Heart left ventricle (tissue), 16 donors: ENCODE measurements at regions of chr4 and their contacts with region 1.

Region 1: DNA sequence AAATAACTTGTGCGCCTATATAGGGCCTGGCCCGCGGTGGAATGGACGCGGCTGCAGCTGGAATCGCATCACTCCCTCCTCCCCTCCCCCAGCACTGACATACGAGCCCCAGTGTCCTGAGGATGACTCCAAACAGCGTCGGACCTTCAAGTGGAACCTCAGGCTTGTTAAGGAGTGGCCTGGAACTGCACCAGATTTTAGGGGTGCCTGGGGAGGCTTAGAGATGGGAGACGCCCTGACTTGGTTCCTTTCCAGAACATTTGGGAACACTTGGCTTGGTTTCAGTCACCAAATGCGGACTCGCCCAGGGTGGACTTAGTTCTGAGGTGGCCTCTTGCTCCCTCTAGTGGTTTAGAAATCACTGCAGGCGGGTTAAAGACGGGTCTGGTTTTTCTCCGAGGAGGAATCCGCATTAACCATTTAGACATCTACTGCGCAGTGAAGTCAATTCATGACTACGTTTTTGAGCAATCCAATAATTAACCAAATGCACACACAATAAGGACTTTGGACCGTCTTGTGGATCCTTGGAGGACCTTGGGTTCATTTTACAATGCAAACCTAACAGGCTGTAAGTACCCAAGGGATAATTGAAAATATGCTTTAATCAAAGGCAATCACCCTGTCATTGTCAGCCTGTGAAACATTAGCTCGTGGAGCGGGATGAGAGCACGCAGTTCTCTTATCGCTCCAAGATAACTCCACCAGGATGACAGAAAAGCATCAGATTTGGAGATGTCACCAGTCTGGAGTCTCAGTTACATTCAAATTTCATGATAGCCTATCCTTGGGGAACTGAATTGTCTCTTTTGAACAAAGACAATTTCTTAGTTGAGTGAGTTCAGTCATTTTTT is 11.2 kb upstream of the PDGFRA start:
- DNase-seq: peak; percentile 77 to 83 (median 80)
- ATAC-seq: peak; percentile 77 to 92 (median 92)
- H3K4me3 ChIP-seq: peak overlapping the region in 10 of 12 donors; percentile 28 to 58 (median 48)
- H3K27ac ChIP-seq: peak overlapping the region in 4 of 12 donors; percentile 39 to 41 (median 40)
- H3K4me1 ChIP-seq: peaks cover 0 to 18% (median 5%) of the 10 kb centered on the region in 12 donors
- H3K27me3 ChIP-seq: peaks cover 0 to 41% (median 0%) of the 10 kb centered on the region in 9 donors
- CTCF ChIP-seq: peak; percentile 80 to 97 (median 94)
- POLR2A ChIP-seq: no peak

Region 2: DNA sequence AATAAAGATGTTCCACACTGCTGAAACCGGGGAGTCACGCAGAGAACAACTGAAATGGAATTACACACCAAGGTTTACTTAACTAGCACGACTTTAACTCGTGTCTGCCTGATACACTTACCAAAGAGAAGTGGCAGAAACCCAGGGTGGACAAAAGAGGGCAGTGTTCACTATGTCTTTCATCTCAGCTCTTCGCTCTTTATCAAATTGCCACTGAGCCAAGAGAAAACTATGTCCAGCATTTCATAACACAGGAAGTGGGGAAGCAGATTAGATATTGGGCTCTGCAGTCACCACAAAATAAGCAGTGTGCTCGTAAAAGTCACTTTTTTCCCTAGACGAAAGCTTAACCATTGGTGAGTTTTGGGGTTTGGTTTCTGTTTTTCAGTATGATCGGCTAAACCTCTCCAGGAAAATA is 309.2 kb before region 1 on chr4:
- intact Hi-C with region 1: loop called in 9 of 10 experiments (anchors 1 to 10 kb)
- DNase-seq: peak in 3 of 5 donors; percentile 37 to 50 (median 44)
- ATAC-seq: peak; percentile 84 to 94 (median 93)
- H3K4me3 ChIP-seq: peak overlapping the region in 8 of 12 donors; percentile 12 to 42 (median 27)
- H3K27ac ChIP-seq: peak overlapping the region in 8 of 12 donors; percentile 27 to 63 (median 40)
- H3K4me1 ChIP-seq: peaks cover 0 to 37% (median 14%) of the 10 kb centered on the region in 12 donors
- H3K27me3 ChIP-seq: peaks cover 0 to 32% (median 11%) of the 10 kb centered on the region in 9 donors
- CTCF ChIP-seq: peak; percentile 40 to 83 (median 67)
- POLR2A ChIP-seq: no peak

Region 3: DNA sequence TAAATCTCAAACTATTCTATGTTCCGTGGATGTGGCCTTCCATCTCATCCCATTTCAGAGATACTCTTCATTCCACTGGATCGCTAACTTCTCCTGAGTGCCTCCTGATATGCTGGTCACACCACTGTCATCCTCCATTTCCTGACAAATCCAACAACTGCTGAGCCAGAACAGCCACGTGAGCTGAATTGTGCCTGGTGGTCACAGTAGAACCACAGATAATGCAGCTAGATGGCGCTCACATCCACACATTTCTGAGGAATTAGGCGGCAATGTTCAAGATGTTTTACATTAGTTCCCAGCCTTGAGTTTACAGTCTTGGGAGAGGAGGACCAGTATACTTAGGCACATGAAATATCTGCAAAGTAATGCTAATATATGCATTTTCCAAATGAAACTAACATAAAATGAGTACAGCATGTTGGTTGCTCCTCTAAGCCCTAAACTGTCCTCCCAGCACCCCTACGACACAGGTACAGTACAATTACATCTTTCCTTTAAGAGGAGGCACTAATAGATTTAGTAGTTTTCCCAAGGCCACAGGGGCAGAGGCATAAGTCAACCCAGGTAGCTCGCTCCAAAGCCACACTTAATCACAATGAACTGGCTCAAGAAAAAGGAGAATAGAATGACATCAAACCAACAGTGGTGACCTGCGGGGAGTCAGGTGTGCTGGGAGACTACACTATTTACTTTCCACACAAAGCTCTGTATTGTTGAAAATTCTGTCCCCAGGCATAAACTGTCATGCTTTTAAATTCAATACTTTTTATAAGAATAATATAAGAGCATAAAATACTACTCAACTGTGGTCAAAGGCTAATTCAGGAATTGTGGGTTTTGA is 287.7 kb before region 1 on chr4:
- intact Hi-C with region 1: loop called in 9 of 10 experiments (anchors 1 to 5 kb)
- DNase-seq: peak in 4 of 5 donors; percentile 66 to 80 (median 74)
- ATAC-seq: peak; percentile 88 to 94 (median 91)
- H3K4me3 ChIP-seq: no peak overlapping the region
- H3K27ac ChIP-seq: no peak overlapping the region
- H3K4me1 ChIP-seq: peaks cover 0 to 11% (median 0%) of the 10 kb centered on the region in 12 donors
- H3K27me3 ChIP-seq: no peaks in the 10 kb centered on the region
- CTCF ChIP-seq: peak; percentile 59 to 84 (median 71)
- POLR2A ChIP-seq: no peak

Region 4: DNA sequence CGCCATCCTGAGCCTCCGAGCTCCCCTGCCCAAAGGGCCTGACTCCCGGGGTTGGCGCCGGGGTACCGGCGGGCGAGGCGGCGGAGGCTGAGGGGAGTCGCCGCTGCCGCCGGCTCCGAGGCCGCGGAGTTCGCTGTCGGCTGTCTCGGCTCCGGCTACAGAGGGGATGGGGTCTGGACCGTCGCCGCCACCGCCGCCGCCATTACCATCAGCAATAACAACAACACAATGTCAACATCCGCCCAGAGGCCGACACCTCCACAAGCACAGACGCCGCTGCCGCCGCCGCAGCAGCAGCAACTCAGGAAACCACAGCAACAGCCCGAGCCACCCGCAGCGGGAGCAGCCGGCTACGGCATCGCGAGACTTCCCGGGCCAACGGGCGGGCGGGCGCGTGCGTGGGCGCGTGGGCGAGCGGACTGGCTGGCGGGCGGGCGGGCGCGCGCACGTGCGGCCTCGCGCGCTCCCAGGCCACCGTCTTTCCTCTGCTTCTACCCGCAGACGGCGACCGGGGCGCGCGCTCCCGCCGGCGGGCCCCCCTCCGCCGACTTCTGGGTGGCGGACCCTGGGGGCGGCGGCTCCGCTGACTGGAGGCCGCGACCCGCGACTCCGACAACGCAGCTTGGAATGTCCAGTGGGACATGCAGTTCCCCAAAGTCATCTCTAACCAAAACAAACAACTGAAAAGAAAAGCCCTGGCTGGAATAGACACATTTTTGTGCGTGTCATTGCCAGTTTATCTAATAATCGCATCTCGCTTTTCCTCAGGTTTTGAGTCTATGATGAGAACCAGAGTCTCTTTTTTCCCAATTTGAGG is 153.4 kb before region 1 on chr4 and contains the start of gene CHIC2:
- intact Hi-C with region 1: loop called in 7 of 10 experiments (anchors 1 to 10 kb)
- DNase-seq: peak; percentile 96 to 99 (median 97)
- ATAC-seq: peak; percentile 74 to 95 (median 90)
- H3K4me3 ChIP-seq: peak within 1 kb of the TSS; percentile 84 to 100 (median 96)
- H3K27ac ChIP-seq: peak within 1 kb of the TSS; percentile 86 to 97 (median 94)
- H3K4me1 ChIP-seq: peaks cover 1 to 66% (median 53%) of the 10 kb centered on the region in 12 donors
- H3K27me3 ChIP-seq: no peaks in the 10 kb centered on the region
- CTCF ChIP-seq: no peak
- POLR2A ChIP-seq: peak; percentile 83 to 94
- total RNA-seq, gene CHIC2: 5.5 to 17.3 (median 11.2) TPM

Region 5: GRCh38 chr4:54099748-54100574 is 117.9 kb before region 1 on chr4 and contains the start of gene GSX2:
- intact Hi-C with region 1: loop called in 1 of 10 experiments (anchors 10 kb)
- DNase-seq: peak in 1 of 5 donors; percentile 31
- ATAC-seq: peak in 2 of 4 donors; percentile 18 to 26
- H3K4me3 ChIP-seq: peak within 1 kb of the TSS; percentile 19 to 53 (median 40)
- H3K27ac ChIP-seq: no peak within 1 kb of the TSS
- H3K4me1 ChIP-seq: peaks cover 0 to 39% (median 23%) of the 10 kb centered on the region in 12 donors
- H3K27me3 ChIP-seq: peaks cover 45 to 100% (median 92%) of the 10 kb centered on the region in 9 donors
- CTCF ChIP-seq: no peak
- POLR2A ChIP-seq: no peak
- total RNA-seq, gene GSX2: not detected